RWPE1 (cell line): ENCODE measurements at regions of chr12 and their contacts with region 1.

Region 1: GRCh38 chr12:7907009-7907408 is 29.0 kb downstream of the SLC2A3 start:
- DNase-seq: peak; percentile 48
- H3K27ac ChIP-seq: no peak overlapping the region
- CTCF ChIP-seq: no peak; the same call in 1 of the 2 replicates

Region 2: DNA sequence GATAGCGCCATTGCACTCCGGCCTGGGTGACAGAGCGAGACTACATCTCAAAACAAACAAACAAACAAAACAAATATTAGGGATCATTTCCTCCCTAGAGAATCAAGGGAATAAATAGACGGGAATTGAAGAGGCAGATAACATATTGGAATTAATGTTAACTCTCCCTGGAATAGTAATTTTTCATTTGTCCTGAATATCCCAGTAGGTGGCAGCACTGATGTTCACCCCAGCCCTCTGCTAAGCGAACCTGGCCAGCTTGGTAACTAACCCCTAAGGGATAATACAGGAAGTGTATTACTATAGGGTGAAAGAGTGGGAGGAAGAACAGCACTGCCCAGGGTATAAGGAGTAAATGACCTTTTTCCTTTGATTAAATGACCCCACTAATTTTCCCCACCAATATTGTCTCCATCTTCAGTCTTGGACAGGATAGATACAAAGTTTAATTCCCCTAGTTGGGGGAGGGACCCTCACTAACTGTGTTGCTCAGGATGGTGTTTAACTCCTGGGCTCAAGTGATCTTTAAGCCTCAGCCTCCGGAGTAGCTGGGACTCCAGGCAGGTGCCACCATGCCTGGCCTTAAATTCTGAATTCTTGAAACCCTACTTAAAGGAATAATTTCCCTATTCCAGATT is 74.8 kb before region 1 on chr12:
- CTCF ChIA-PET with region 1: no interaction called
- POLR2A ChIA-PET with region 1: no interaction called
- DNase-seq: peak; percentile 68
- H3K27ac ChIP-seq: no peak overlapping the region
- CTCF ChIP-seq: peak; percentile 19; the same call in 1 of the 2 replicates

Region 3: DNA sequence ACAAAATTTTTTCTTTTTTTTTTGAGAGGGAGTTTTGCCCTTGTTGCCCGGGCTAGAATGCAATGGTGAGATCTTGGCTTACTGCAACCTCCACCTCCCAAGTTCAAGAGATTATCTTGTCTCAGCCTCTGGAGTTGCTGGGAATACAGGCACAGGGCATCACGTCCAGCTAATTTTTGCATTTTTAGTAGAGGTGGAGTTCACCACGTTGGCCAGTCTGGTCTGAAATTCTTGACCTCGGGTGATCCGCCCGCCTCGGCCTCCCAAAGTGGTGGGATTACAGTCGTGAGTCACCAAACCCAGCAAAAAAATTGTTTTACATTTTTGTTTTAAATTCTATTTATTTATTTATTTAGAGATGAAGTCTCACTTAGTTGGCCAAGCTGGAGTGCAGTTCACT is 29.6 kb before region 1 on chr12:
- CTCF ChIA-PET with region 1: no interaction called
- POLR2A ChIA-PET with region 1: no interaction called
- DNase-seq: no peak
- H3K27ac ChIP-seq: no peak overlapping the region
- CTCF ChIP-seq: no peak

Region 4: DNA sequence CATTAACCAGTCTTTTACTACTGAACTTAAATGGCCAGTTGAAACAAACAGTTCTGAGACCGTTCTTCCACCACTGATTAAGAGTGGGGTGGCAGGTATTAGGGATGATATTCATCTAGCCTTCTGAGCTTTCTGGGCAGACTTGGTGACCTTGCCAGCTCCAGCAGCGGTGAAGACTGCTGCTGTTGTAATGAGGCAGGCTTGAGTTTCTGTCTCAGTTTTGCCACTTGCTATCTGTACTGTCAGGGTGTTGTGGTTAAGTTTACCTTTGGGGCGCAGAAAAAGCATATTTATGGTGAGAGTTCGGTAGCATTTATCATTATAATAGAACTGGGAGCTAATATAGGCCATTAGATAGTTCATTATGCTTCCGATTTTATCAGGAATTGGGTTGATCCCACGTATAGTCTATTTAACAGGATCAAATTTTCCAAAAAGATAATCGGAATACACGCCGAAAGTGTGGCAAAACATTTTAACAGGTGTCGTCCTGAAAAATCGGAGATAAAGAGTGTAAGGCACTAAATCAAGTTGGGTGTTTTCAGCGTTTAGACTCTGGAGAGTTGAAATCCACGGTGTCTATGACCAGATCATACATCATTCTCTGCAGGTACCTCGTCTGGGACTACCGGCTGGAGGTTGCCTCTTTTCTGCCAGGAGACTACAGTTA is 174.4 kb after region 1 on chr12:
- CTCF ChIA-PET with region 1: no interaction called
- POLR2A ChIA-PET with region 1: interaction called, 10 read pairs
- DNase-seq: no peak
- H3K27ac ChIP-seq: peak overlapping the region; percentile 82
- CTCF ChIP-seq: no peak

Region 5: DNA sequence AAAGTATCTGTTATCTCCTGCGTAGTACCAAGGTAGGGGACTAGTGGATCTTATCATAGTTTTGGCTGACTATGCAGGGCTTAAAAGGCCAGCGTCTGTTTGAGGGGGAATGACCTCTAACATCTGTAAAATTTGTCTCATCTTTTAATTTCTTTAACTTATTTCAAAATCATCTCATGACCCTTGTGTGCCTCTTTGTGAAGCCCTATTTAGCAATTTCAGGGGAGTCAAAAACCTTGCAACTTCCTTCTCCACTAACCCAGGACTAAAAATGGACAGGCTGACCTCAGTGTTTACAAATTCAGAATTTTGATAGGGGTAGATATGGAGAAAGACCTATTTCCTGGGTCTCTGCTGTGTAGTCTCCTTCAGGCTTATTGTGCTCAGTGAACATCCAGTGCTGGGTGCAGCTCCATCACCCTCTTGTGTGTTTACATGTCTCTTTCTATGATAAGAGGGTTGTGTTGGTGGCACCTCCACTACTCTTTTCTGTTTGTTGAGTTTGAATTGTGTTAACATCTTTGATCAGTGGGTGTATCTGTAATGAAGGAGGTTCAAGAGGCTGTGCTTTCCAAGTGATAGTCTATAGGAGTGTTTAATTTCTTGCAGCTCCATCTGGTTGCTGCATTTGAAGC is 189.4 kb after region 1 on chr12:
- CTCF ChIA-PET with region 1: no interaction called
- POLR2A ChIA-PET with region 1: no interaction called
- DNase-seq: no peak
- H3K27ac ChIP-seq: no peak overlapping the region
- CTCF ChIP-seq: no peak